Naive thymus-derived CD4-positive, alpha-beta T cell (primary cell): ENCODE measurements at regions of chr3 and their contacts with region 1.

Region 1: DNA sequence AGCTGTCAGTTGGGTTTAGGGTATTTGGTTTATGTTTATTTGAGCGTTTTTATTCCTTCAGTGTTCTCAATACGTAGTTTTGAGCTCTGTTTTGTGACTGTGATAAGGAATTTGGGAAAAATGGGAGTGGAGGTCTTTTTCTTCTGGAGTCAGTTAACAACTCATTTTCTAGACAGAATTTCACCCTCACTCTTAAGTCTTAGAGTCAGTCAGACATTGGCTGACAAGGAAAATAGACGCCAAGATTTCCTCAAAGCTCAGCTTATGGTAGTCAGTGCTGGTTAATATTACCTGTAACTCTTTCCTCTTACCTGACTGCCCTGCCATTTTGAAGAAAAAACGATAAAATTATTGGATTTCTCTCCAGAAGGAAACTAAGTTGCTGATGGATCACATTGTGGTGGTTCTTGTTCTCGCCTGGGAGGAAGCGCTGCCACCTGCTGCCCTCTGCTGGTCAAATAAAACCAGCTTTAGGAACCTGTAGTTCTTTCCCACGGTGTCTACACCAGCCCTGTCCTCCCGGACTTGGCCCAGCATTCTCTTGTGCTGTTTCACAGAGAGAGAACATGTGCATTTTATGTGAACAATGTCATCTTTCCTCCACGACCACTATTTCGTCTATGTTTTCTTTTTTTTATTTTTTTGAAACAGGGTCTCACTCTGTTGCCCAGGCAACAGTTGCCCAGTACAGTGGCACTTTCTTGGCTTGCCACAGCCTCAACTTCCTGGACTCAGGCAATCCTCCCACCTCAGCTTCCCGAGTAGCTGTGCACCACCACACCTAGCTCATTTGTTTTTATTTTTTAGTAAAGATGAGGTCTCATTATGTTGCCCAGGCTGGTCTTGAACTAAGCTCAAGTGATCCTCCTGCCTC is 41.4 kb upstream of the UMPS start:
- DNase-seq: peak; percentile 26 to 69 (median 49)
- ATAC-seq: peak; percentile 90
- H3K4me3 ChIP-seq: no peak overlapping the region
- H3K4me3 Mint-ChIP-seq: no peak overlapping the region
- H3K27ac ChIP-seq: no peak overlapping the region
- H3K27ac Mint-ChIP-seq: no peak overlapping the region
- H3K4me1 ChIP-seq: no peaks in the 10 kb centered on the region
- H3K4me1 Mint-ChIP-seq: peaks cover 0 to 7% (median 2%) of the 10 kb centered on the region in 7 donors
- H3K27me3 ChIP-seq: peaks cover 0 to 4% of the 10 kb centered on the region in 2 donors
- H3K27me3 Mint-ChIP-seq: peaks cover 0 to 56% (median 18%) of the 10 kb centered on the region in 5 donors

Region 2: DNA sequence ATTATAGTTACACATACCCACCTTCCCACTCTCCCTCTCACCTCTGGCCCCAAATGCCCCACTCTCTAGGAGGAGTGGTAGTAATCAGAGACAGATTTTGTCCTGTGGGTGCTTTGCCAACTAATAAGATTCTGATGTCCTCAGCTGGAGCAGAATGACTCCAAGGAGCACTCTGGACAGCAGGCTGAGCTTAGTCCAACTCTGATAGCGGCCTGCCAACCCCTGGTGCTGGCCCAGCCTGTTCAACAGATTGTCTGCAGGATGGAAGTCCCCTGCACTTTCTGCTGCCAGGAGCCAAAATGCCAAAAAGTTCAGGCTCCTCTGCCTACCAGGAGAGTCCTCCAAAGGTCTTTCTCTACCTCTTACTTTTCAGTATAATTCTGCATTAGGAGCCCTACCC is 119.1 kb before region 1 on chr3:
- CTCF ChIA-PET with region 1: interaction called, 26 read pairs
- POLR2A ChIA-PET with region 1: interaction called, 4 read pairs
- intact Hi-C with region 1: loop called (anchors 1 kb)
- DNase-seq: no peak
- ATAC-seq: no peak
- H3K4me3 ChIP-seq: no peak overlapping the region
- H3K4me3 Mint-ChIP-seq: no peak overlapping the region
- H3K27ac ChIP-seq: no peak overlapping the region
- H3K27ac Mint-ChIP-seq: no peak overlapping the region
- H3K4me1 ChIP-seq: no peaks in the 10 kb centered on the region
- H3K4me1 Mint-ChIP-seq: peaks cover 0 to 16% (median 0%) of the 10 kb centered on the region in 7 donors
- H3K27me3 ChIP-seq: no peaks in the 10 kb centered on the region
- H3K27me3 Mint-ChIP-seq: peaks cover 0 to 36% (median 4%) of the 10 kb centered on the region in 5 donors

Region 3: GRCh38 chr3:124707656-124708062 is 18.8 kb after region 1 on chr3:
- CTCF ChIA-PET with region 1: no interaction called
- POLR2A ChIA-PET with region 1: no interaction called
- intact Hi-C with region 1: no loop called
- DNase-seq: no peak
- ATAC-seq: no peak
- H3K4me3 ChIP-seq: no peak overlapping the region
- H3K4me3 Mint-ChIP-seq: no peak overlapping the region
- H3K27ac ChIP-seq: no peak overlapping the region
- H3K27ac Mint-ChIP-seq: no peak overlapping the region
- H3K4me1 ChIP-seq: no peaks in the 10 kb centered on the region
- H3K4me1 Mint-ChIP-seq: peaks cover 0 to 6% (median 0%) of the 10 kb centered on the region in 7 donors
- H3K27me3 ChIP-seq: no peaks in the 10 kb centered on the region
- H3K27me3 Mint-ChIP-seq: peaks cover 12 to 57% (median 51%) of the 10 kb centered on the region in 5 donors

Region 4: DNA sequence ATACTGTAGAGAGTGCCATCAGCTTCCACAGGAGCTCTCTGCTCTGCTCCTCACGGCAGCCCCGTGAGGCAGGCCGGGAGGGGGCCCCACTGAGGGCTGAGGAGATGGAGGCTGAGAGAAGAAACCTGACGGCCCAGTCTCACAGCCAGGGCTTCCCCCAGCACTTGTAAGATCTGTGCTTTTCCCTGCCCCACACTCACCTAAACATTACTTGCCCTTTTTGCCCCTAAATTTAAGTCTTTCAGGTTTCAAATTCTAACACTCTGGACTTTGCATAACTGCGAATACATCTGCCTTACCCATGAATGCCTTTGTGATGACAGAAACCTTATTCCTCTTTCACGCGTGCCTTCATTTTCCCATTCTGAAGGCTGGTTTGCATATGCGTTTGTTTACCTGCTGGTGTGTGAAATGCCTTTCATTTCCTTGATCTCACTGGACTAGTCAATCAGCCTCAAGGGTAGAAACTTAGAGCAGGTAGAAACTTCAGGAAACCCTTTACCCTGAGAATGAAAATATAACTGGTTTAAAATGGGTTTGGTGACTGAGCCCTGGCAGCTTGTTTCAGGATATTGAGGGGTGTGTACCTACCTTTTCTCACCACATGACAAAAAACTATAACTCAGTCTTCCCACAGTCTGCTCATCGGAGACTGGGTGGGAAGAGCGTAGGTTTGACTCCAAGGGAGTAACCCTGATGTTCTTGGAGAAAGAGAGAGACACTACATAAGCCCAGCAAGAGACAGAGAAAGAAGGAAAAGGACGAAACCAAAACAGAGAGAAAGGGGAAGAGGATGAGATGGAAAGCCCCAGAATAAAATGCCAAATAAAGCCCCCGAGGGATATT is 503.6 kb after region 1 on chr3:
- CTCF ChIA-PET with region 1: no interaction called
- POLR2A ChIA-PET with region 1: no interaction called
- intact Hi-C with region 1: no loop called
- DNase-seq: no peak
- ATAC-seq: no peak
- H3K4me3 ChIP-seq: no peak overlapping the region
- H3K4me3 Mint-ChIP-seq: no peak overlapping the region
- H3K27ac ChIP-seq: no peak overlapping the region
- H3K27ac Mint-ChIP-seq: no peak overlapping the region
- H3K4me1 ChIP-seq: no peaks in the 10 kb centered on the region
- H3K4me1 Mint-ChIP-seq: peaks cover 0 to 12% (median 0%) of the 10 kb centered on the region in 7 donors
- H3K27me3 ChIP-seq: no peaks in the 10 kb centered on the region
- H3K27me3 Mint-ChIP-seq: peaks cover 0 to 44% (median 0%) of the 10 kb centered on the region in 5 donors